Gastrocnemius medialis (tissue), 4 donors: ENCODE measurements at regions of chr3 and their contacts with region 1.

Region 1: GRCh38 chr3:124467980-124468902 is 262.0 kb upstream of the UMPS start:
- DNase-seq: no peak
- ATAC-seq: no peak
- H3K4me3 ChIP-seq: no peak overlapping the region
- H3K27ac ChIP-seq: no peak overlapping the region
- H3K4me1 ChIP-seq: no peaks in the 10 kb centered on the region
- H3K27me3 ChIP-seq: no peaks in the 10 kb centered on the region
- CTCF ChIP-seq: peak; percentile 58 to 86 (median 67)
- POLR2A ChIP-seq: no peak

Region 2: DNA sequence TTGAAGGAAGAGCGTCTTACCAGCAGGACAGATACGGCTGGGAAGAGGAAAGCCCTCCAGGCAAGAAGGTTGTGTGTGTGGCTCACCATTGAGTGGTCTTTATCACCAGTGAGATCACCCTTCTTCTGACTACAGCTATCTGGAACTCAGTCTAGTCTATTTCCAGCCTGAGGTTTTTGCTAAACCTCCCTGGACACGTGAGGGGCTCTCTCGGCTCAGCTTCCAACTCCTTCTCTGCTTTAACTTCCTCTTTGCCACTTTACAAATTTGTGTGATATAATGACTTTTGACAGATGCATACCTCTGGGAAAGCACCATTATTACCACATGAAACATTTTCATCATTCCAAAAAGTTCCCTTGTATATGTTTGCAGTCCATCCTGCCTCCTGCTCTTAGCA is 461.1 kb before region 1 on chr3:
- in situ Hi-C with region 1: loop called in 2 of 4 experiments (anchors 10 to 25 kb)
- intact Hi-C with region 1: loop called (anchors 5 kb)
- DNase-seq: no peak
- ATAC-seq: no peak
- H3K4me3 ChIP-seq: no peak overlapping the region
- H3K27ac ChIP-seq: no peak overlapping the region
- H3K4me1 ChIP-seq: no peaks in the 10 kb centered on the region
- H3K27me3 ChIP-seq: no peaks in the 10 kb centered on the region
- CTCF ChIP-seq: no peak
- POLR2A ChIP-seq: no peak

Region 3: GRCh38 chr3:124014366-124014942 is 453.8 kb before region 1 on chr3:
- in situ Hi-C with region 1: loop called in 3 of 4 experiments (anchors 5 to 25 kb)
- intact Hi-C with region 1: loop called (anchors 5 kb)
- DNase-seq: no peak
- ATAC-seq: no peak
- H3K4me3 ChIP-seq: no peak overlapping the region
- H3K27ac ChIP-seq: no peak overlapping the region
- H3K4me1 ChIP-seq: no peaks in the 10 kb centered on the region
- H3K27me3 ChIP-seq: no peaks in the 10 kb centered on the region
- CTCF ChIP-seq: no peak
- POLR2A ChIP-seq: no peak

Region 4: DNA sequence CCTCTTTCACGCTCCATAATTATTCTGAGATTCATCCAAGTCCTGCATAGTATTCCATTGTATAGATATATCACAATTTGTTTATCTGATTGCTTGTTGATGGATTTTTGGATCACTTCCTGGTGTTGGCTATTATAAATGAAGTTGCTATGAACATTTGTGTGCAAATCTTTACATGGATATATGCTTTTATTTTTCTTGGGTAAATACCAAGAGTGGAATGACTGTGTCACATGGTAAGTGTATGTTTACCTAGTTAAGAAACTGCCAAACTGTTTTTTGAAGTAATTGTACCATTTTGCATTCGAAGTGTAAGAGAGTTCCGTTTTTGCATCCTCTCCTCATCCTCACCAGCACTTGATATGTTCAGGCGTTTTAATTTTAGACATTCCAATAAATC is 441.7 kb before region 1 on chr3:
- in situ Hi-C with region 1: loop called in 2 of 4 experiments (anchors 10 to 25 kb)
- intact Hi-C with region 1: no loop called
- DNase-seq: no peak
- ATAC-seq: no peak
- H3K4me3 ChIP-seq: no peak overlapping the region
- H3K27ac ChIP-seq: no peak overlapping the region
- H3K4me1 ChIP-seq: no peaks in the 10 kb centered on the region
- H3K27me3 ChIP-seq: no peaks in the 10 kb centered on the region
- CTCF ChIP-seq: no peak
- POLR2A ChIP-seq: no peak

Region 5: DNA sequence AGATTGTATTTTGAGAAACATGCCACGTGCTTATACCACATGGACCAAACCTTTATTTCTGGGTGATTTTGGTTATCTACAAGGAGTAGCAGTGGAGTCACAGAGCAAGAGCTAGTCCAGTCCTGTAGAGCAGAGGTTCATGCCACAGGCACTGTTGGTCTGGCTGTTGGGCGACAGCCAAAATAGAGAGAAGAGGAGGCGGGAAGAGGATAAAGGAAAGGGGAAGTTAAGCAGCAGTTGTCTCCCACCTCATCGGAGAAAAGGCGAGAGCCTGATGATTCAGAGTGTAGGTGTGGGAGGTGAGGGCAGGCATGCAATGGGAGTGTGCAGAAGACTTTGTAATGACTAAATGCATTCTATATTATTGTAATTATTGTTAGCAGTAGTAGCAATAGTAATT is 238.8 kb before region 1 on chr3:
- in situ Hi-C with region 1: no loop called
- intact Hi-C with region 1: no loop called
- DNase-seq: no peak
- ATAC-seq: no peak
- H3K4me3 ChIP-seq: no peak overlapping the region
- H3K27ac ChIP-seq: no peak overlapping the region
- H3K4me1 ChIP-seq: no peaks in the 10 kb centered on the region
- H3K27me3 ChIP-seq: no peaks in the 10 kb centered on the region
- CTCF ChIP-seq: no peak
- POLR2A ChIP-seq: no peak

Region 6: DNA sequence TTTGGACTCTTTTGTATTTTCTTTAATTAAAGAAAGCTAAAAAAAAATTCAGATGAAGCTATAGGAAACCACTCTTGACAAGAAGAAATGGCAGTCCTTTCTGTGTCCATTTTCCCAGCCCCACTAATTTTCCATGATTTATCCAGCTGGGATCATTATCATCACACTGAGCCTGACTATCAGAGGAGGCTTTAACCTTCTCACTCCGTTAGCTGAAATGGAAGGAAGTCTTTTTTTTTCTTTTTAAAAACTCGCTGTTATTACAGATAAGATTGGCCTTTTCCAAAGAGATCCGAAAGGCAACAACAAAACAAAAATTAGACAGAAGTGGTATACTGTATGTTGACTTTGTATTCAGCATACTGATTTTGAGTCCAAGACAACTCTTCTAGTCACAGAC is 110.1 kb before region 1 on chr3:
- in situ Hi-C with region 1: loop called in 1 of 4 experiments (anchors 5 kb)
- intact Hi-C with region 1: no loop called
- DNase-seq: no peak
- ATAC-seq: no peak
- H3K4me3 ChIP-seq: no peak overlapping the region
- H3K27ac ChIP-seq: no peak overlapping the region
- H3K4me1 ChIP-seq: no peaks in the 10 kb centered on the region
- H3K27me3 ChIP-seq: no peaks in the 10 kb centered on the region
- CTCF ChIP-seq: no peak
- POLR2A ChIP-seq: no peak